Naive thymus-derived CD4-positive, alpha-beta T cell (primary cell): ENCODE measurements at regions of chr1 and their contacts with region 1.

Region 1: GRCh38 chr1:103547840-103548239 is 22.3 kb downstream of the RNPC3 start:
- DNase-seq: no peak
- ATAC-seq: no peak
- H3K4me3 ChIP-seq: no peak overlapping the region
- H3K4me3 Mint-ChIP-seq: no peak overlapping the region
- H3K27ac ChIP-seq: no peak overlapping the region
- H3K27ac Mint-ChIP-seq: no peak overlapping the region
- H3K4me1 ChIP-seq: no peaks in the 10 kb centered on the region
- H3K4me1 Mint-ChIP-seq: peaks cover 0 to 6% (median 0%) of the 10 kb centered on the region in 7 donors
- H3K27me3 ChIP-seq: no peaks in the 10 kb centered on the region
- H3K27me3 Mint-ChIP-seq: no peaks in the 10 kb centered on the region

Region 2: GRCh38 chr1:103525607-103526507 is 22.0 kb before region 1 on chr1 and contains the start of gene RNPC3:
- CTCF ChIA-PET with region 1: no interaction called
- POLR2A ChIA-PET with region 1: no interaction called
- intact Hi-C with region 1: loop called in 1 of 2 experiments (anchors 2 kb)
- DNase-seq: peak; percentile 83 to 92 (median 88)
- ATAC-seq: peak; percentile 91
- H3K4me3 ChIP-seq: peak within 1 kb of the TSS; percentile 78
- H3K4me3 Mint-ChIP-seq: peak within 1 kb of the TSS; percentile 87 to 99 (median 99)
- H3K27ac ChIP-seq: peak within 1 kb of the TSS; percentile 99
- H3K27ac Mint-ChIP-seq: peak within 1 kb of the TSS; percentile 97 to 100 (median 99)
- H3K4me1 ChIP-seq: peaks cover 16 to 24% of the 10 kb centered on the region in 2 donors
- H3K4me1 Mint-ChIP-seq: peaks cover 29 to 65% (median 54%) of the 10 kb centered on the region in 7 donors
- H3K27me3 ChIP-seq: no peaks in the 10 kb centered on the region
- H3K27me3 Mint-ChIP-seq: peaks cover 0 to 2% (median 0%) of the 10 kb centered on the region in 5 donors
- total RNA-seq, gene RNPC3: 35.3 to 99.4 (median 52.1) TPM